ENCODE measurements at regions of chr4 and their contacts with region 1.

Region 1: DNA sequence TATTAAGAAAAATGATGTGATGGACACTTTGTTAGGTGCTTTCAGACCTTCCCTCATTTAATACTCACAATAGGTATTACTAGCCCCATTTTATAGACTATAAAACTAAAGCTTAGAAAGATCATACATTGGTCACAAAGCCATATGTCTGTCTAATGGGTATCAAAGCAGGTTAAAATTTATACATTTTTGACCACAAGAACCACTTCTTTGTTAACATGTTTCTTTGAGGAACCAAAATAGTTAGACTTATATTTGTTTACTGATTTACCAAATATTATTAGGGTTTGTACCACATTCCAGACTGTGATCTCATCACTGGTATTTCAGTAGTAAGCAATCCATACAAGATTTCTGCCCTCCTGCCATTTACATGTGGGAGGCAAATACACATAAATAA is 363.3 kb downstream of the NAF1 start:
- DNase-seq: no peak
- H3K4me3 ChIP-seq: no peak overlapping the region
- CTCF ChIP-seq: no peak
- POLR2A ChIP-seq: no peak

Region 2: DNA sequence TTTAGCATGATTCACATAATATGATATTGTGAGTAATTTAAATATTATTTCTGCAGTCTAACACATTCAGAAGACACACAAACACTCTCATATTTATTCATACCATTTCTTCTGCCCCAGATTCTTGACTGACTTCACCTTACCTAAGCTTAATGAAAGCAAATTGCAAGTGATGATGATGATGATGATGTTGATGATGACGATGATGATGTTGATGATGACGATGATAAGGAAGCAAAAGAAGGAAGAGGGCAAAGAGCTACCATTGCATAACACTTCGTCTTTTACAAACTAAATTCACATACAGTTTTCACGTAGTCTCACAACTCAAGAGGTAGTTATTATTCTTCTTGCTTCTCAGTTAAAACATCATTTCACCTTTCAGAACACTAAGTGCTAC is 41.4 kb before region 1 on chr4:
- intact Hi-C with region 1: loop called (anchors 2 kb)
- DNase-seq: no peak
- H3K4me3 ChIP-seq: no peak overlapping the region
- CTCF ChIP-seq: no peak
- POLR2A ChIP-seq: no peak

Measured in lower leg skin (tissue), 4 donors.